ENCODE measurements at regions of chr17 and their contacts with region 1.

Region 1: GRCh38 chr17:69084911-69085310 is 24.2 kb upstream of the ABCA9 start:
- DNase-seq: peak in 2 of 5 donors; percentile 27 to 34
- H3K4me3 ChIP-seq: no peak overlapping the region
- H3K27ac ChIP-seq: no peak overlapping the region
- H3K4me1 ChIP-seq: no peaks in the 10 kb centered on the region
- H3K27me3 ChIP-seq: no peaks in the 10 kb centered on the region
- CTCF ChIP-seq: peak; percentile 16

Region 2: GRCh38 chr17:68941761-68942160 is 143.2 kb before region 1 on chr17:
- intact Hi-C with region 1: no loop called
- DNase-seq: no peak
- H3K4me3 ChIP-seq: no peak overlapping the region
- H3K27ac ChIP-seq: no peak overlapping the region
- H3K4me1 ChIP-seq: no peaks in the 10 kb centered on the region
- H3K27me3 ChIP-seq: no peaks in the 10 kb centered on the region
- CTCF ChIP-seq: no peak

Region 3: DNA sequence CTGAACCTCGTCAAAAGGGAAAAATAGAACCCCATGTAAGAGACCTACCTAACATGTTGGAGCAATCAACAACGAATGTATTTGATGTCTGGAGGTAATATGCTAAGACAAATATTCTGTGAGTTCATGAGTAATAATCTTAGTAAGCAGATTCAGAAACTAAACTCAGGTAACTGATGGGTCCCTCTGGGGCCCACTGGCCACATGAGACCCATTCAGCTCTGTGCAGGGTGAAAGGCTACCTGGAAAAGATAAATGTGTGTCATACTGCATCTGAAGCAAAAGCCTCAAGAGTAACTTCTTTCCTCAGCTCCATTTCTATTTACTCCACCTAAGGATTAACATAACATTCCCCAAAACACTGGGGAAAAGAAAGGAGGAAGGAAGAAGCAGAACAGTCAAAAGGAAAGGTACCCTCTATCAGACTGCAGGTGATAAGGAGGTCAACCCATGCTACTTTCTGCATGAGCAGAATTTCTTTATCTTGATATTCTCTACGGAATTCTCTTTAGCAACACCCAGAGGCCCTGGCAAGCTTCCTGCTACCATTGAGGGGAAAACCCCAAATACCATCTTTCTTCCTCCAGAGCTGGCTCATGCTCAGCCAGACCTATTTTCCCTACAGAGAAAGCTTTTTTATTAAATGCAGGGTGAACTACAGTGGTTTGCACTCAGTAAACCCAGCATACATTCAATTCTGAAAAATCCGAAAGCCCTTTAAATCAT is 94.5 kb after region 1 on chr17:
- intact Hi-C with region 1: no loop called
- DNase-seq: no peak
- H3K4me3 ChIP-seq: no peak overlapping the region
- H3K27ac ChIP-seq: no peak overlapping the region
- H3K4me1 ChIP-seq: no peaks in the 10 kb centered on the region
- H3K27me3 ChIP-seq: no peaks in the 10 kb centered on the region
- CTCF ChIP-seq: no peak

Region 4: GRCh38 chr17:69192754-69193153 is 107.8 kb after region 1 on chr17:
- intact Hi-C with region 1: loop called (anchors 10 kb)
- DNase-seq: no peak
- H3K4me3 ChIP-seq: no peak overlapping the region
- H3K27ac ChIP-seq: no peak overlapping the region
- H3K4me1 ChIP-seq: no peaks in the 10 kb centered on the region
- H3K27me3 ChIP-seq: no peaks in the 10 kb centered on the region
- CTCF ChIP-seq: no peak

Measured in kidney (tissue), 22 donors.